ENCODE measurements at regions of chr13 and their contacts with region 1.

Region 1: DNA sequence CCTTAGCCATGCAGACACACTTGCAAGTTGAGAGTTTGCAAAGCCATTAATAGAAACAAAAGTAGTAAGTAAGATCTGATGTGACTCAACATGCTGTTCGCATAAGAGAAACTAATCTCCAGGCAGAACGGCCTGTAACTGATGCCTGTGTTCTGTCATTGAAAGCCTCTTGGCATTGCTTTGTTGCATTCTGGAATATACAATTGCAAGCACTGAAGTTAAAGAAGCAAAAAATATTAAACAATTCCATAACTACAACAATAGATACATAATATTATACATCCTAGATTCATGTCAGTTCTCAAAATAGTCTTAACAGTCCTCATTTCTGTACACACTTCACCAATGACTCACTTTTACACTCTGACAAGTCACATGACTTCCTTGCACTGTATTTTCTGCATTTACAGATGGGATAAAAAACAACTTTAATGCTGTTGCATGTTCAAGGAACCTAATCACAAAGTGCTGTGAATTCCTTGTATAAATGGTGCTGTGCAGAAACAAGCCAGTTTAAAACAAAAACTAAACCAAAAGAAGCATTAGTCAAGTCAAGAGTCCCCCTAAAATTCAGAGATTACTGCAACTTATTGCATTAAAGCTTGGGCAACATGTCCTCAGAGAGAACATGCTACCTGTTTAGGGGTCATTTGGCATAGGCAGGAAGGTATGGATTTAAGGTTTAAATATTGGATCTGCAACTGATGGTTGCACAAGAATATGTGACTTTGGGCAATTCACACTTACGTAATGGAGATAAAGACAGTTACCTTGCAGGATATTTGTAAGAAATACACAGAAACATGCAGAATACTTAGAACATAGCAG is 79.5 kb upstream of the SERP2 start:
- DNase-seq: no peak
- ATAC-seq: no peak
- H3K4me3 ChIP-seq: no peak overlapping the region
- H3K4me3 Mint-ChIP-seq: peak overlapping the region in 2 of 10 donors; percentile 33 to 42
- H3K27ac ChIP-seq: no peak overlapping the region
- H3K27ac Mint-ChIP-seq: peak overlapping the region in 5 of 9 donors; percentile 30 to 85 (median 79)
- H3K4me1 ChIP-seq: no peaks in the 10 kb centered on the region
- H3K4me1 Mint-ChIP-seq: peaks cover 0 to 26% (median 16%) of the 10 kb centered on the region in 7 donors
- H3K27me3 ChIP-seq: no peaks in the 10 kb centered on the region
- H3K27me3 Mint-ChIP-seq: peaks cover 10 to 22% (median 14%) of the 10 kb centered on the region in 5 donors

Region 2: GRCh38 chr13:44259045-44260027 is 34.8 kb before region 1 on chr13:
- CTCF ChIA-PET with region 1: no interaction called
- POLR2A ChIA-PET with region 1: no interaction called
- intact Hi-C with region 1: loop called in 1 of 2 experiments (anchors 2 kb)
- DNase-seq: peak in 8 of 9 donors; percentile 17 to 77 (median 35)
- ATAC-seq: peak; percentile 87
- H3K4me3 ChIP-seq: peak overlapping the region; percentile 2
- H3K4me3 Mint-ChIP-seq: peak overlapping the region; percentile 40 to 87 (median 66)
- H3K27ac ChIP-seq: no peak overlapping the region
- H3K27ac Mint-ChIP-seq: peak overlapping the region; percentile 68 to 94 (median 88)
- H3K4me1 ChIP-seq: peaks cover 7 to 10% of the 10 kb centered on the region in 2 donors
- H3K4me1 Mint-ChIP-seq: peaks cover 9 to 24% (median 19%) of the 10 kb centered on the region in 7 donors
- H3K27me3 ChIP-seq: no peaks in the 10 kb centered on the region
- H3K27me3 Mint-ChIP-seq: peaks cover 0 to 6% (median 0%) of the 10 kb centered on the region in 5 donors

Measured in naive thymus-derived CD4-positive, alpha-beta T cell (primary cell).